Activated CD4-positive, alpha-beta T cell treated with anti-CD3 and anti-CD28 coated beads, Interleukin-2, amount 10 ng/mL, durations not matched to agents 7 days and 5 days (primary cell): ENCODE measurements at regions of chr14 and their contacts with region 1.

Region 1: GRCh38 chr14:58395812-58396788 is at the start of gene TOMM20L:
- DNase-seq: peak; percentile 63
- H3K4me3 Mint-ChIP-seq: peak within 1 kb of the TSS; percentile 63
- H3K27ac Mint-ChIP-seq: peak within 1 kb of the TSS; percentile 71
- H3K4me1 Mint-ChIP-seq: peaks cover 11% of the 10 kb centered on the region
- H3K27me3 Mint-ChIP-seq: no peaks in the 10 kb centered on the region
- total RNA-seq, gene TOMM20L: not detected

Region 2: DNA sequence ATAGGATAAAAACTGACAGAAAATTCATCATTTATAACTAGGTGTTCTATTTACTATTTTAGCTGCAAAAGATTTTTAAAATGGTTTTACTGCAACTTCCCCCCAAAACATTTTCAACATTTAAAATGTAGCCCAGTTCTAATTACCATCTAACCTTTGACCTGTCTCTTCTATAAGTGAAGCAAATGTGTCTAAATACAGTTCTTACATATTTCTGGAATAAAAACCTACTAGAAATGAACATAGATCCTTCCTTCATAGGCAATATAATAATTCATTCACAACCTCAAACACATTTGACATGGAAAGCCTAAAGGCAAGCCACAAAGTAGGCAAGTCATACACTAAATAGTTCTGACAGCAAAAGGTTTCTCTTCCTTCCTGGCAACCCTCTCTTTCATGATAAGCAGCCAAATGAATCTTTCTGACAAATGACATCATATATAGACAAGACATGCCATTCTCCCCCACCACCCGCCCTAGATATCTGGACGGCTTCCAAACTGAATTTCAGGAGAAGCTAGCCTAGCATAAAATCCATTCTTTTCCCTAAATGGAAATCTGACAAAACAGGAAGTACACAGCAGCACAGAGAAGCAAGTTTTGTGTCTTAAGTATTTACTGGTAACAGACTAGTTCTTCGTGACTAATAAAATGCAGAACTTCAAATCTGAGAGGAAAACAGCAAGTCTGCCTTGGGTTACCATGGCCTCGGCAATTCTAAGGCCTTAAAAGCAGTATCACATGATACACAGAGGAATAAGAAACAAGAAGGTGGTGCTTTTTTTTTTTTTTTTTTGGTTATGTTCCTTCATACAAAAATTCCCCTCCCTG is 114.9 kb before region 1 on chr14:
- CTCF ChIA-PET with region 1: no interaction called
- POLR2A ChIA-PET with region 1: interaction called, 13 read pairs
- DNase-seq: peak; percentile 25
- H3K4me3 Mint-ChIP-seq: peak overlapping the region; percentile 37
- H3K27ac Mint-ChIP-seq: peak overlapping the region; percentile 80
- H3K4me1 Mint-ChIP-seq: peaks cover 58% of the 10 kb centered on the region
- H3K27me3 Mint-ChIP-seq: no peaks in the 10 kb centered on the region

Region 3: DNA sequence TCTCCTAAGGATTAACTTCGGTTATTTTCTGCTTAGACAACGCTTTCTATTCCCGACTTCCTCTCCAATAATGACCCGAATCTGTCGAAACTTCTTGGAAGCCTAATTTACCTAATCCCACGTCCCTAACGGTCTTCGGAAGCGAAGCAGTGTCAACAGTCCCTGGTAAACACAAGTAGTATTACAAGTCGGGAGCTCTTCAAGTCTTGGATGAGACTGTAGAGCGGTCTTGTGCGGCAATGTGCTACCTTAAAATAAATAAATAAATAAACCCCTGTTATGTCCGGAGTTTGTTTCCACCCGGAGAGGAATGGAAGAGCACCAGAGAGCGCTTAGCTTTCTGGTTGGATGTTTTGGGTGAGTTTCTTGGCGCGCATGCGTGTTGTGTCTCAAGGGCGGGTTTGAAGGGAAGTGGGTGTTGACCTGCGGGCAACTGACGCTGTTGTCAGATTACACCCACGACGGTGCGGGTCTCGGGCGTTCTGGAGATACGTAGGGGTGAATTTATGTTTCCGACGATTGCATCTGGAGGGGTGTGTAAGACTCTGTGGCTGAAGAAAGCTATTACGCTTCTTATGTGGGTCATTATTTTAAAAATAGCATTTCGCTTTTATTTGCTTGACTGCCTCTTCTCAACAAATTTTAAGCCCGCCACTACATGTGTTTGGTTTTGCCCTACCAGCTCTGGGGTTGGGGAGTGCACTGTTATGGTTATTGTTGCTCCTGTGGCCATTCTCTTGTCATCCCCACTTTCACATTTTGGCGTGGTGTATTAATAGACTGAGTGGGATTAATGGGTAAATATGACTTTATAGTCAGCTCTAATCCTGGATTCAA is 31.4 kb after region 1 on chr14 and contains the starts of genes KIAA0586 and TIMM9:
- CTCF ChIA-PET with region 1: interaction called, 26 read pairs
- POLR2A ChIA-PET with region 1: no interaction called
- DNase-seq: peak; percentile 97
- H3K4me3 Mint-ChIP-seq: peak within 1 kb of the TSS; percentile 86
- H3K27ac Mint-ChIP-seq: peak within 1 kb of the TSS; percentile 99
- H3K4me1 Mint-ChIP-seq: peaks cover 45% of the 10 kb centered on the region
- H3K27me3 Mint-ChIP-seq: no peaks in the 10 kb centered on the region
- total RNA-seq, gene KIAA0586: 29.7 to 31.4 TPM
- total RNA-seq, gene TIMM9: 36.2 to 45.1 TPM